Common myeloid progenitor, CD34-positive (primary cell): ENCODE measurements at regions of chr17 and their contacts with region 1.

Region 1: DNA sequence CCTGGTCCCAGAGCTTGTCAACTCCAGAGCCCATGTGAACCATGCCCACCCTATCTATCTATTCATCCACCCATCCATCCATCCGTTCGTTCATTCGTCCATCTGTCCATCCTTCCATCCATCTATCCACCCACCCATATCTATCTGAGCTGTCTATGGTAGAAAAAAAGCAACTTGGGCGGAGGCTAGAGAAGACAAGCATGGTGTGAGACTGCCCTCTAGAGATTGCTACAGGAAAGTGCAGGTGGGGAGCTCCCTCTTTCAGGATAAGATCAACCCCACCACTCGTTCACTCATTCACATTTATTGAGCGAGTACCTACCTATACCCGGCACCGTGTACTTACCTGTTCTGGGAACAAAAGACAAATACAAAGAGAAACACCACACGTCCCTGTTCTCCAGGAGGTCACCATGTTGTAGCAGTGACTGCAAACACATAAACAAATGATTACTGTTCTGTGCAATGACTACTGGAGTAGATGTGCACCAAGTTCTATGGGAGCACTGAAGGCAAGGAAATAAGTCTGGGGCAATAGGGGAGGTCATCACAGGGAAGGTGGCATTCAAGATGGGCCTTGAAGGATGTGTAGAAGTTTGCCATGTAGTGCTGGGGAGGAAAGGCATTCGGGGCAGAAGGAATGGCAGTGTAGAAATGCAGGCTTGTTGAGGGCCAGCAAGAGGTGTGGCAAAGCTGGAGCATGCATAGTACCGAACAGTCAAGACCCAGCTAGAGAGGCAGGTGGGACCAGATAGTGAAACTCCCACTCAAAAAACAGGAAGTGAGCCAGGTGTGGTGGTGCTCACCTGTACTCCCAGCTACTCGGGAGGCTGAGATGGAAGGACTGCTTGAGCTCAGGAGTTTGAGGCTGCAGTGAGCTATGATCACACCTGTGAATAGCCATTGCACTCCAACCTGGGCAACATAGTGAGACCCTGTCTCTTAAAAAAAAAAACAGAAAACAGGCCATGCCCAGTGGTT is 13.4 kb upstream of the ATP5MC1 start:
- DNase-seq: peak; percentile 76 to 90 (median 81)
- H3K4me3 ChIP-seq: no peak overlapping the region
- H3K27ac ChIP-seq: no peak overlapping the region
- H3K4me1 ChIP-seq: peaks cover 0 to 3% (median 2%) of the 10 kb centered on the region in 4 experiments
- H3K27me3 ChIP-seq: peaks cover 0 to 1% (median 0%) of the 10 kb centered on the region in 5 experiments

Region 2: GRCh38 chr17:48816774-48817590 is 62.2 kb before region 1 on chr17 and contains the start of gene TTLL6:
- CTCF ChIA-PET with region 1: interaction called, 1,090 read pairs
- POLR2A ChIA-PET with region 1: interaction called, 3 read pairs
- DNase-seq: peak; percentile 84 to 93 (median 93)
- H3K4me3 ChIP-seq: peak within 1 kb of the TSS in 6 of 7 experiments; percentile 11 to 73 (median 58)
- H3K27ac ChIP-seq: no peak within 1 kb of the TSS
- H3K4me1 ChIP-seq: peaks cover 0 to 16% (median 12%) of the 10 kb centered on the region in 4 experiments
- H3K27me3 ChIP-seq: peaks cover 0 to 34% (median 20%) of the 10 kb centered on the region in 5 experiments

Region 3: DNA sequence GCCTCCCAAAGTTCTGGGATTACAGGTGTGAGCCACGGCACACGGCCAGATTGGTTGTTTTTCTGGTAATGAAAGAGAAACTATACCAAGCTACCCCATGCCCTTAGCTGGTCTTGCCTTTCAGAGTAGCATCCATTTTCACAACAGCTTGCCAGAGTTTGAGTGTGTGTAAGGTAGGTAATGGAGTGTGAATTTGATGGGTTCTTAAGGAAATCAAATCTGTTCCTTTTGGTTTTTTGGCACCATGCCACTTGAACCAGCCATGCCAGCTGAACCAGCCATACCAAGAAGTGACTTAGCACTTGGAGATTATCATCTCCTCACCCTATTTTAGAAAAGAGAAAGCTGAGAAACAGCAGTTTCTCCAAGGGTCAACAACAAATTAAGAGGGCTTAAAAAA is 43.2 kb before region 1 on chr17:
- CTCF ChIA-PET with region 1: interaction called, 11 read pairs
- POLR2A ChIA-PET with region 1: no interaction called
- DNase-seq: peak in 2 of 3 donors; percentile 46 to 53
- H3K4me3 ChIP-seq: no peak overlapping the region
- H3K27ac ChIP-seq: no peak overlapping the region
- H3K4me1 ChIP-seq: peaks cover 18 to 72% (median 54%) of the 10 kb centered on the region in 4 experiments
- H3K27me3 ChIP-seq: no peaks in the 10 kb centered on the region

Region 4: GRCh38 chr17:48850792-48851323 is 28.4 kb before region 1 on chr17:
- CTCF ChIA-PET with region 1: interaction called, 12 read pairs
- POLR2A ChIA-PET with region 1: interaction called, 5 read pairs
- DNase-seq: peak in 2 of 3 donors; percentile 58 to 69
- H3K4me3 ChIP-seq: no peak overlapping the region
- H3K27ac ChIP-seq: peak overlapping the region; percentile 98 to 99
- H3K4me1 ChIP-seq: peaks cover 23 to 46% (median 30%) of the 10 kb centered on the region in 4 experiments
- H3K27me3 ChIP-seq: no peaks in the 10 kb centered on the region

Region 5: GRCh38 chr17:48860034-48860433 is 19.2 kb before region 1 on chr17:
- CTCF ChIA-PET with region 1: interaction called, 49 read pairs
- POLR2A ChIA-PET with region 1: no interaction called
- DNase-seq: peak in 1 of 3 donors; percentile 23
- H3K4me3 ChIP-seq: no peak overlapping the region
- H3K27ac ChIP-seq: no peak overlapping the region
- H3K4me1 ChIP-seq: peaks cover under 1 to 15% (median 5%) of the 10 kb centered on the region in 4 experiments
- H3K27me3 ChIP-seq: no peaks in the 10 kb centered on the region

Region 6: DNA sequence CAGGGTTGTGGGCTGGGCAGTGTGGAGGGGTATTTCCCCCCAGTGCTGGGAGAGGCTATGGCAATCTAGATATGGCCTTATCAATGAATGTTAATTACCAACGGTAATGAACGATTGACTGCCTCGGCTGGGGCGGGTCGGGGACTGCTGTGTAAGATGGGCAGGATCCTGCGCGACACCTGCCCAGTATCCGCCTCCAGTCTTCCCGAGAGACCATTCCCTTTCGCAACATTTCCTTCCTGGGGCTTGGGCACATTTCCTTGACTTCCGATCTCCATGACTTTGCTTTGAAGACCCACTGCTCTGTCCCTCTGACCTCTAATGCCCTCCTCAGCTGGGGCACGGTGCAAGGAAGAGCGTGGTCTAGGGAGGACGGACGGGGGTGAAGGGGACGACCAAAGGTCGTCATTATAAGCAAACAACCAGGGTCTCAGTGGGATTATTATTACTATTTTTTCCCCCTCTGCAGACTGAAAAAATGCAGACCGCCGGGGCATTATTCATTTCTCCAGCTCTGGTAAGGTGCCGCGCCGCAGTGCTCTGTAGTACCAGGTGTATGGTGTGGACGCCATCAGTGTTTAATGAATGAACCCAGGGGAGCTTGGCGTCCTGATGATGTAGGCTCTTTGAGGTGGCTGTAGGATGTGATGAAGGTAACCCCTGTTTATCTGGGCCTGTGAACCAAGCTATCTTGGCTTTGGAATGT is 13.9 kb after region 1 on chr17:
- CTCF ChIA-PET with region 1: interaction called, 11 read pairs
- POLR2A ChIA-PET with region 1: no interaction called
- DNase-seq: no peak
- H3K4me3 ChIP-seq: peak overlapping the region; percentile 54 to 96 (median 82)
- H3K27ac ChIP-seq: peak overlapping the region; percentile 58 to 84
- H3K4me1 ChIP-seq: peaks cover 11 to 20% (median 16%) of the 10 kb centered on the region in 4 experiments
- H3K27me3 ChIP-seq: no peaks in the 10 kb centered on the region

Region 7: GRCh38 chr17:48973806-48974205 is 94.6 kb after region 1 on chr17:
- CTCF ChIA-PET with region 1: no interaction called
- POLR2A ChIA-PET with region 1: no interaction called
- DNase-seq: no peak
- H3K4me3 ChIP-seq: no peak overlapping the region
- H3K27ac ChIP-seq: no peak overlapping the region
- H3K4me1 ChIP-seq: no peaks in the 10 kb centered on the region
- H3K27me3 ChIP-seq: peaks cover 0 to 54% (median 10%) of the 10 kb centered on the region in 5 experiments